Gastrocnemius medialis (tissue), 4 donors: ENCODE measurements at regions of chr9 and their contacts with region 1.

Region 1: GRCh38 chr9:72169178-72169577 is 19.9 kb downstream of the GDA start:
- DNase-seq: no peak
- ATAC-seq: peak; percentile 46 to 86
- H3K4me3 ChIP-seq: peak overlapping the region in 1 of 4 donors; percentile 10
- H3K27ac ChIP-seq: peak overlapping the region; percentile 47 to 76 (median 54)
- H3K4me1 ChIP-seq: peaks cover 18 to 22% of the 10 kb centered on the region in 2 donors
- H3K27me3 ChIP-seq: no peaks in the 10 kb centered on the region
- CTCF ChIP-seq: no peak
- POLR2A ChIP-seq: no peak

Region 2: GRCh38 chr9:72149231-72149975 is 19.8 kb before region 1 on chr9 and contains the start of gene GDA:
- in situ Hi-C with region 1: no loop called
- intact Hi-C with region 1: no loop called
- DNase-seq: no peak
- ATAC-seq: no peak
- H3K4me3 ChIP-seq: peak within 1 kb of the TSS; percentile 41 to 56 (median 46)
- H3K27ac ChIP-seq: peak within 1 kb of the TSS in 1 of 4 donors; percentile 9
- H3K4me1 ChIP-seq: peaks cover 4 to 6% of the 10 kb centered on the region in 2 donors
- H3K27me3 ChIP-seq: no peaks in the 10 kb centered on the region
- CTCF ChIP-seq: no peak
- POLR2A ChIP-seq: no peak
- total RNA-seq, gene GDA: 0.62 to 2.5 (median 0.82) TPM in 3 of 4 donors, not detected in the other

Region 3: DNA sequence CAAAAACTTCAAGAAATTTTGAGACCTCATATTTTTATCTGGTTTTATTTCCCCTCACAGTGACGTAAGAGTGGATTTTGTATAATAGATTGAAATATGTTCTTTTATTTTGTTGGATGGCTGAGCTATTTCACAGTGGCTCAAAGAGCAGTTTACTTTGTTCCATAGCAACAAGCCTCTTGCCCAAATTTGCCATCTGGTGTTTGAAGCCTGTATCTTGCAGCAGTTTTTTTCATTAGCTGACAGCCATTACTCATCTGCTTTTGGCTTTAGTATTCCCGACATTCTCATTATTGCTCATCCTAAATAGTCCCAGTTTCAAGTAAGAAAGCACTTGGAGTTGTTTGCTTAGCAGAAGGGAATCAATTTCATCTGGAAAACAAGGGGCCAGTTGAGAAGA is 16.4 kb after region 1 on chr9:
- in situ Hi-C with region 1: no loop called
- intact Hi-C with region 1: loop called (anchors 1 kb)
- DNase-seq: no peak
- ATAC-seq: no peak
- H3K4me3 ChIP-seq: no peak overlapping the region
- H3K27ac ChIP-seq: no peak overlapping the region
- H3K4me1 ChIP-seq: no peaks in the 10 kb centered on the region
- H3K27me3 ChIP-seq: no peaks in the 10 kb centered on the region
- CTCF ChIP-seq: no peak
- POLR2A ChIP-seq: no peak